Spleen (tissue), 13 donors: ENCODE measurements at regions of chr18 and their contacts with region 1.

Region 1: GRCh38 chr18:55415258-55415871 is 172.6 kb downstream of the TCF4 start:
- DNase-seq: peak; percentile 94
- H3K4me3 ChIP-seq: no peak overlapping the region
- H3K27ac ChIP-seq: peak overlapping the region in 2 of 8 donors; percentile 11 to 32
- H3K4me1 ChIP-seq: peaks cover 4 to 40% (median 22%) of the 10 kb centered on the region in 6 donors
- H3K27me3 ChIP-seq: no peaks in the 10 kb centered on the region
- CTCF ChIP-seq: peak; percentile 70 to 92 (median 87)
- POLR2A ChIP-seq: no peak

Region 2: DNA sequence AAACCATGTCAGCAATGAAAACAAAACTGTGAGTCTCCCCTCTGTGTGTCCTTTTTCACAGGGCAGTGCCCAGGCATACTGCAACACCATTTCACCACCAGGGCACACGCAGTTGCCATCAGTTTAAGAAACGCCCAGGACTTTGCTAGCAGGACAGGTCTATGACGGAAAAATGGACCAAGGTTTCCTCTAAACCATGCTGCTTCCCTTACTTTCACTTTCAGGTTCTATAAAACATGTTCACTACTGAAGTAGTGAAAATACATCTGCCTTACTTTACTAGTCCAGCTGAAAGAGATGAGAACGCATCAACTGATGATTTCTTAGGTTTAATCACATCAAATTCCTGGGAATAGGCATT is 62.1 kb after region 1 on chr18:
- intact Hi-C with region 1: loop called (anchors 10 kb)
- DNase-seq: no peak
- H3K4me3 ChIP-seq: peak overlapping the region; percentile 12 to 65 (median 34)
- H3K27ac ChIP-seq: peak overlapping the region; percentile 68 to 84 (median 78)
- H3K4me1 ChIP-seq: peaks cover 5 to 27% (median 14%) of the 10 kb centered on the region in 6 donors
- H3K27me3 ChIP-seq: no peaks in the 10 kb centered on the region
- CTCF ChIP-seq: peak in 6 of 11 experiments; percentile 33 to 48 (median 38)
- POLR2A ChIP-seq: no peak

Region 3: GRCh38 chr18:55589625-55590291 is 174.4 kb after region 1 on chr18:
- intact Hi-C with region 1: loop called (anchors 10 kb)
- DNase-seq: peak; percentile 98
- H3K4me3 ChIP-seq: peak overlapping the region; percentile 18 to 74 (median 52)
- H3K27ac ChIP-seq: peak overlapping the region; percentile 76 to 93 (median 90)
- H3K4me1 ChIP-seq: peaks cover 0 to 42% (median 21%) of the 10 kb centered on the region in 6 donors
- H3K27me3 ChIP-seq: peaks cover 0 to 23% (median 0%) of the 10 kb centered on the region in 7 donors
- CTCF ChIP-seq: peak in 2 of 11 experiments; percentile 24 to 31
- POLR2A ChIP-seq: peak; percentile 10 to 69 (median 30)

Region 4: DNA sequence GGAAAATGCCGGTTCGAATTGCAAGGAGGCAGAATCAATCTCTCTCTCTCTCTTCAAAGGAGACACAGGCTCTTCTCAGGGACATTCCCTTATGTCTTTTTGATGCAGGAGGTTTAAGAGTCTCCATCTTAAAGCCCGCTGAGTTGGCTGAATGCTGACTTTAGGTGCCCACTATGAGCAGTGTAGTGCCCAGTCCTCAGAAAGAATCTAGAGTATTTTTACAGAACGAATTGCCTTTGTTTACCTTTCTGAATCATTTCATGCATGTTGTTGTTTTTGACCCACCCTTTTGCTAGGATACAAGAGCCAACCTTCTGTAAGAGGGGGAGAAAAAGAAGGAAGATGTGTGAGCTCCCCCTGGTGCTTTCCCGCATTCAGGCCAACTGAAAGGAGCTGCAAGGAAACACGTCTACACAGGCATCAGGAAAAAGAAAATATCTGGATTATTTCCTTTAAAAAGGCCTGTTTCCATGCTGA is 366.2 kb after region 1 on chr18:
- intact Hi-C with region 1: loop called (anchors 10 kb)
- DNase-seq: no peak
- H3K4me3 ChIP-seq: no peak overlapping the region
- H3K27ac ChIP-seq: no peak overlapping the region
- H3K4me1 ChIP-seq: peaks cover 0 to 42% (median 10%) of the 10 kb centered on the region in 6 donors
- H3K27me3 ChIP-seq: peaks cover 0 to 17% (median 6%) of the 10 kb centered on the region in 7 donors
- CTCF ChIP-seq: peak in 9 of 11 experiments; percentile 29 to 70 (median 51)
- POLR2A ChIP-seq: no peak

Region 5: GRCh38 chr18:56575819-56576663 is 1160.7 kb after region 1 on chr18:
- intact Hi-C with region 1: loop called (anchors 10 kb)
- DNase-seq: no peak
- H3K4me3 ChIP-seq: no peak overlapping the region
- H3K27ac ChIP-seq: peak overlapping the region in 1 of 8 donors; percentile 51
- H3K4me1 ChIP-seq: peaks cover 0 to 30% (median 18%) of the 10 kb centered on the region in 6 donors
- H3K27me3 ChIP-seq: no peaks in the 10 kb centered on the region
- CTCF ChIP-seq: peak; percentile 25 to 82 (median 69)
- POLR2A ChIP-seq: no peak